HEK293T (cell line): ENCODE measurements at regions of chr2 and their contacts with region 1.

Region 1: GRCh38 chr2:69724540-69725159 is 17.3 kb upstream of the ANXA4 start:
- DNase-seq: peak; percentile 75

Region 2: DNA sequence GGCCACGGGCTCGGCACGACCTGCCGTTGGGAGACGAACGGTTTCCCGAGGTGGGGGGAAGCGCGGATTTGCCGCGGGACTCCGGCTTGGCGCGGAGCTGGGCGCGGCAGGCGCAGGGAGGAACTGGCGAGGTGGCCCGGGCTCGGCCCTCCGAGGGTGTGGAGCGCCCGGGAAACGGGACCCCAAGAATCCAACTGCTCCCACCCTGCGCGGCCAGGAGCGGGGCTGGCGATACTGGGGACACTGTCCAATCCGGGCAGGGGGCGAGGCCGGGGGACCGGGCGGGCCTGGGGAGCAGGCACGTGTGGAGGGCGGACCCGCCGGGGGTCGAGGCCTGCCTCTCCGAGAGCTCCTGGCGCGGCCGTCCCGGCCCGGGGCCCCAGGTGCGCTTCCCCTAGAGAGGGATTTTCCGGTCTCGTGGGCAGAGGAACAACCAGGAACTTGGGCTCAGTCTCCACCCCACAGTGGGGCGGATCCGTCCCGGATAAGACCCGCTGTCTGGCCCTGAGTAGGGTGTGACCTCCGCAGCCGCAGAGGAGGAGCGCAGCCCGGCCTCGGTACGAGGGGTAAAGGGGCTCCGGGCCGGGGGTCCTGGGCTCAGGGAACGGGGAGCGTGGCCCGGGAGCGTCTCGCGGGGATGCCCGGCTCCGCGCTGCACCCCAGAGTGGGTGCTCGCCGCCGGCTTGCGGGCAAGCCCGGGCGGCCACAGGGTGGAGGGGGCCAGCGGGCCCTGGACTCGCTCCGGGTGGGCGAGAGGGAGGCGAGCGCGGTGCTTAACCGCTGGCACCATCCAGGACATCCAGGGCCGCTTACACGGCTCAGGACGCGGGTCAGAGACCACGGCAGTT is 17.2 kb after region 1 on chr2 and contains the start of gene ANXA4:
- CTCF ChIA-PET with region 1: interaction called, 24 read pairs
- POLR2A ChIA-PET with region 1: interaction called, 4 read pairs
- DNase-seq: peak; percentile 56

Region 3: DNA sequence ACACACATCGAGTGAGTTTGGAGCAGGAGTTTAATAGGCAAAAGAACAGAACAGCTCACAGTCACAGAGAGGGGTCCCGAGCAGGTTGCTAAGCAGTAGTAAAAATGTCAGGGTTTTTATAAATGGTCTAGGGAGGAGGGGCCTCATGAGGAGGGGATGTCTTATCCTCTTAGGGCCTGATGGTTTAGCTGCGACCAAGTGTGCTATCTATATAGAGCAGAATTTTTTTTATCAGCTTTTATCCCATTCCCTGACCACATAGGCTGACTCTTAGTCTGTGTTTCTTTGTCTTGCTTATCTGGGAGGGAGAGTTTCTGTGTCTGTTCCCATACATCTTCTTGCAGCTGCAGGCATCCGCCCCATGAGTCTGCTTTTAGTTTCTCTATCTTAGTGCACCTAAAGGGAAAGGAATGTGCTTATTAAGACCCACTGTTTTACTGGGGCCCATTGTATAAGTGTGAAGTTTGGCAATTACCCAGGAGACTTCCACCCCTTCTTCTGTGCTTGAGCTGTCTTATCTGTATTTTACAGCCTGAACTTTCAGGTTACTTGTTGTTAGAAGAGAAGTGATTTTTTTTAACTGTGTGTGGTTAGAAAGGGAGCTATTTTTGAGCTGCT is 74.4 kb after region 1 on chr2:
- CTCF ChIA-PET with region 1: interaction called, 11 read pairs
- POLR2A ChIA-PET with region 1: no interaction called
- DNase-seq: peak; percentile 32

Region 4: GRCh38 chr2:69811018-69811417 is 86.4 kb after region 1 on chr2:
- CTCF ChIA-PET with region 1: interaction called, 102 read pairs
- POLR2A ChIA-PET with region 1: no interaction called
- DNase-seq: no peak

Region 5: GRCh38 chr2:69816923-69817542 is 92.4 kb after region 1 on chr2:
- CTCF ChIA-PET with region 1: interaction called, 102 read pairs
- POLR2A ChIA-PET with region 1: no interaction called
- DNase-seq: peak; percentile 56

Region 6: GRCh38 chr2:69914170-69914960 is 189.7 kb after region 1 on chr2:
- CTCF ChIA-PET with region 1: interaction called, 10 read pairs
- POLR2A ChIA-PET with region 1: interaction called, 7 read pairs
- DNase-seq: peak; percentile 95